ENCODE measurements at regions of chr9 and their contacts with region 1.

Region 1: DNA sequence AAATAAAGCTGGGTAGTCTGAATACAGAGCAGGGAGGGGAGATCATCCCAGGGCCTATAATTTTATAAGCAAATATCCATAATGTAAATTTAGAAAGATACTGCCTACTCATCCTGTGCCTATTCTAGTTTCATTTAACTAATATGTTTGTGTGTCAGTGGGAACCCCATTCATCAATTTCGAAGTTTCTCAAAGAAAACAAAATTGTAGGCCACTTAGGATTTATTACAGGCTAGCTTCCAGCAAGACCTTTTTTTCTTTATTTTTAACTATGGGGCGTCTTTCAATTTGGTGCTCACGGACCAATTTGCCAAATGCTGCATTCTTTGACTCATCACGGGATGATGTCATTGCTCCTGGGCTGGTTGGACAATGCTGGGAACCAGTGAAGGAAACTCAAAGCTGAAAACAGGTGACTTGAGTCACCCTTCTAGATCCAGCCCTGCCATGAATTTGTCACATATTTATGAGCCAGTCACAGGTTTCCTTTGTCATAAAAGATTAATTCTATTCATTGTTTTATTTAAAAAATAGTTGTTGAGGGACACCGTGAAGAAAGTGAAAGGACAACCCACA is 13.4 kb downstream of the PCSK5 start:
- DNase-seq: no peak
- ATAC-seq: no peak
- H3K4me3 ChIP-seq: no peak overlapping the region
- H3K27ac ChIP-seq: no peak overlapping the region
- H3K4me1 ChIP-seq: no peaks in the 10 kb centered on the region
- H3K27me3 ChIP-seq: no peaks in the 10 kb centered on the region
- CTCF ChIP-seq: no peak
- POLR2A ChIP-seq: no peak

Region 2: DNA sequence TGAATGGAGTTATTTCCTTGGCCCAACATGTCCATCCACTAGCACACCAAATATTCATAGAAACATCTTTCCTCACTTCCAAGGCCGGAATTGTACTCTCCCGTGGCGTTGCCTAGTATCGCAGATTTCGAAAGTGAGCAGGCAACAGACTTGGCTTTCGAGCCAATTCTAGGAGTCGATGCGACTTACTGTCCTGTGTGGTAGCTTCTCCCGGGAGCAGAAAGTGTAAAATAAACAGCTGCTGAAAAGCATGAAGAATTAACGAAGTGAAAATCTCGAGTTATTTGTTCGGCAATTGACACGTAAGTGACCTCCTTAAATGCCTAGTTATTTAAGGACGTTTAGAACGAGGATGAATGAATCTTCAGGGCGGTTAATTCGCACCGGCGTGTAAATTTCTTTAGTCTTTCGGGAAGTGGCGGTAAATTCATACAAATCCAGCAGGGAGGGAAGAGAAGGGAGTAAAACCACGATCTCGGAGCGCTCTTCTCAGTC is 13.8 kb before region 1 on chr9:
- in situ Hi-C with region 1: no loop called
- intact Hi-C with region 1: no loop called
- DNase-seq: peak in 1 of 2 donors; percentile 37
- ATAC-seq: peak; percentile 75 to 78
- H3K4me3 ChIP-seq: peak overlapping the region; percentile 66 to 83 (median 80)
- H3K27ac ChIP-seq: peak overlapping the region; percentile 68 to 79 (median 75)
- H3K4me1 ChIP-seq: peaks cover 14 to 30% of the 10 kb centered on the region in 2 donors
- H3K27me3 ChIP-seq: peaks cover 0 to 11% (median 10%) of the 10 kb centered on the region in 3 donors
- CTCF ChIP-seq: no peak
- POLR2A ChIP-seq: no peak

Region 3: DNA sequence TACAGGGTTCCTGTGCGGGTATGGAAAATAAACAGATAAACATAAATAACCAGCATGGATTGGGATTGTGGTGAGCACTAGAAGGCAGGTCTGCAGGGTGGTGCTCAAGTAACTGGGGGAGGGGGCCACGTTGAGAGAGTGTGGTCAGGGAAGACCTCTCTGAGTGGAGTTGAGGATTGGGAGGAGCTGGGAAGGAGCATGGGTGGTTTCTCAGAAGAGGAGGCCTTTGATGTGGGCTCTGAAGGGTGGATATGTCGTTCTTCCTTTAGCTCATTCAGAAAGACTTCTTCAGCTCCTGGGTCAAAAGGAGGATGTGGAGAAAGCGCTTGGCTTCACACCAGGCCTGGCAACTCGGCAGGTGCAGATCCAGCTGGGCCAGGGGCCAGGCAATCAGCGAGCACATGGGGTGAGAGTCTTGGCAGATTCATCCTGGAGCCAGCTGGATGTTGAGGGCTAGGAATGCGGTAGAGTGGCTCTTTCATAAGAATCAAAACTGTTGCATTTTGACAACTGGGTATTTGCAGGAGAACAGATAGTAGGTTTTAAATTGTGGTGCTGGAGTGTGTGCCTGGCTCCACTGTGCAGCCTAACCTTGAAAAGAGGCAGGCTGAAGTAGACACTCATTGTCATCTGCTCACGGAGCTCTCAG is 58.3 kb after region 1 on chr9:
- in situ Hi-C with region 1: no loop called
- intact Hi-C with region 1: no loop called
- DNase-seq: peak; percentile 22 to 26
- ATAC-seq: peak in 1 of 2 donors; percentile 54
- H3K4me3 ChIP-seq: no peak overlapping the region
- H3K27ac ChIP-seq: no peak overlapping the region
- H3K4me1 ChIP-seq: peaks cover 0 to 16% of the 10 kb centered on the region in 2 donors
- H3K27me3 ChIP-seq: no peaks in the 10 kb centered on the region
- CTCF ChIP-seq: no peak
- POLR2A ChIP-seq: no peak

Region 4: GRCh38 chr9:76023715-76024195 is 119.9 kb after region 1 on chr9:
- in situ Hi-C with region 1: loop called in 1 of 4 experiments (anchors 25 kb)
- intact Hi-C with region 1: no loop called
- DNase-seq: no peak
- ATAC-seq: no peak
- H3K4me3 ChIP-seq: no peak overlapping the region
- H3K27ac ChIP-seq: no peak overlapping the region
- H3K4me1 ChIP-seq: no peaks in the 10 kb centered on the region
- H3K27me3 ChIP-seq: no peaks in the 10 kb centered on the region
- CTCF ChIP-seq: no peak
- POLR2A ChIP-seq: no peak